Astrocyte of the cerebellum (primary cell): ENCODE measurements at regions of chr6 and their contacts with region 1.

Region 1: GRCh38 chr6:53734473-53735299 is 60.1 kb upstream of the LRRC1 start:
- DNase-seq: peak; percentile 71
- H3K4me3 ChIP-seq: no peak overlapping the region
- CTCF ChIP-seq: peak; percentile 33

Region 2: GRCh38 chr6:53679446-53679933 is 55.2 kb before region 1 on chr6:
- in situ Hi-C with region 1: no loop called
- DNase-seq: peak; percentile 19
- H3K4me3 ChIP-seq: no peak overlapping the region
- CTCF ChIP-seq: peak; percentile 58

Region 3: DNA sequence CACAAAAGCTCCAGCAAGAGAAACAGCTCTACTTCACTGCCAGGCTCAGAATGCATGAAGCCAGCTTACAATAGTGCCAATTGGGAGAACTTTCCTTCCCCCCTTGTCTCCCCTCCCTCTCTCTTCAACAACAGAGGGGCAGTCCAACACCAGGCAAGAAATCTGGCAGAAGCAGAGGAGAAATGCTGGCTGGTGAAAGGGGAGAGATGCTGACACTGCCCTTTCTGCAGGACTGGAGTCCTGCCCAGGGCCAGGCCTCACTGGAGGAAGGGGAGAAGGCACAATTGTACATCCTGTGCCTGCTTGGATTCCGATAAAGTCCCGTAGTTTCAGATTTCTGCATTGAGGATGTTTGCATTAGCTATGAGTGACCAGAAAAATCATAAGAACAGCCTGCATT is 208.7 kb after region 1 on chr6:
- in situ Hi-C with region 1: loop called (anchors 10 kb)
- DNase-seq: no peak
- H3K4me3 ChIP-seq: no peak overlapping the region
- CTCF ChIP-seq: no peak